ENCODE measurements at regions of chr4 and their contacts with region 1.

Region 1: GRCh38 chr4:6640292-6641163 is at the start of gene MRFAP1:
- DNase-seq: peak; percentile 94 to 97 (median 95)
- H3K4me3 ChIP-seq: peak within 1 kb of the TSS; percentile 90 to 92
- H3K4me3 Mint-ChIP-seq: peak within 1 kb of the TSS; percentile 96 to 100 (median 98)
- H3K27ac ChIP-seq: peak within 1 kb of the TSS; percentile 98
- H3K27ac Mint-ChIP-seq: peak within 1 kb of the TSS; percentile 98 to 100 (median 99)
- H3K4me1 ChIP-seq: peaks cover 31% of the 10 kb centered on the region
- H3K4me1 Mint-ChIP-seq: peaks cover 29 to 40% (median 34%) of the 10 kb centered on the region in 4 donors
- H3K27me3 ChIP-seq: no peaks in the 10 kb centered on the region
- H3K27me3 Mint-ChIP-seq: no peaks in the 10 kb centered on the region
- total RNA-seq, gene MRFAP1: 149 to 157 TPM

Region 2: GRCh38 chr4:6250235-6250983 is 390.1 kb before region 1 on chr4:
- CTCF ChIA-PET with region 1: no interaction called
- POLR2A ChIA-PET with region 1: no interaction called
- intact Hi-C with region 1: no loop called
- DNase-seq: peak in 4 of 5 donors; percentile 61 to 70 (median 66)
- H3K4me3 ChIP-seq: no peak overlapping the region
- H3K4me3 Mint-ChIP-seq: no peak overlapping the region
- H3K27ac ChIP-seq: no peak overlapping the region
- H3K27ac Mint-ChIP-seq: no peak overlapping the region
- H3K4me1 ChIP-seq: no peaks in the 10 kb centered on the region
- H3K4me1 Mint-ChIP-seq: peaks cover 0 to 6% (median 5%) of the 10 kb centered on the region in 4 donors
- H3K27me3 ChIP-seq: peaks cover 6% of the 10 kb centered on the region
- H3K27me3 Mint-ChIP-seq: peaks cover 10 to 30% of the 10 kb centered on the region in 2 donors

Region 3: GRCh38 chr4:6574747-6575502 is 65.6 kb before region 1 on chr4 and contains the start of gene MAN2B2:
- CTCF ChIA-PET with region 1: no interaction called
- POLR2A ChIA-PET with region 1: interaction called, 21 read pairs
- intact Hi-C with region 1: loop called (anchors 1 kb)
- DNase-seq: peak; percentile 76 to 83 (median 77)
- H3K4me3 ChIP-seq: peak within 1 kb of the TSS; percentile 84 to 97
- H3K4me3 Mint-ChIP-seq: peak within 1 kb of the TSS; percentile 88 to 95 (median 90)
- H3K27ac ChIP-seq: peak within 1 kb of the TSS; percentile 77
- H3K27ac Mint-ChIP-seq: peak within 1 kb of the TSS; percentile 83 to 91 (median 88)
- H3K4me1 ChIP-seq: peaks cover 26% of the 10 kb centered on the region
- H3K4me1 Mint-ChIP-seq: peaks cover 9 to 34% (median 12%) of the 10 kb centered on the region in 4 donors
- H3K27me3 ChIP-seq: no peaks in the 10 kb centered on the region
- H3K27me3 Mint-ChIP-seq: no peaks in the 10 kb centered on the region
- total RNA-seq, gene MAN2B2: 51.5 to 53.2 TPM

Region 4: GRCh38 chr4:6673660-6674499 is 33.4 kb after region 1 on chr4:
- CTCF ChIA-PET with region 1: interaction called, 19 read pairs
- POLR2A ChIA-PET with region 1: interaction called, 168 read pairs
- intact Hi-C with region 1: loop called (anchors 1 kb)
- DNase-seq: peak; percentile 94 to 96 (median 96)
- H3K4me3 ChIP-seq: peak overlapping the region; percentile 59 to 65
- H3K4me3 Mint-ChIP-seq: peak overlapping the region; percentile 92 to 99 (median 98)
- H3K27ac ChIP-seq: peak overlapping the region; percentile 71
- H3K27ac Mint-ChIP-seq: peak overlapping the region; percentile 95 to 99 (median 98)
- H3K4me1 ChIP-seq: peaks cover 36% of the 10 kb centered on the region
- H3K4me1 Mint-ChIP-seq: peaks cover 39 to 59% (median 49%) of the 10 kb centered on the region in 4 donors
- H3K27me3 ChIP-seq: no peaks in the 10 kb centered on the region
- H3K27me3 Mint-ChIP-seq: no peaks in the 10 kb centered on the region

Region 5: DNA sequence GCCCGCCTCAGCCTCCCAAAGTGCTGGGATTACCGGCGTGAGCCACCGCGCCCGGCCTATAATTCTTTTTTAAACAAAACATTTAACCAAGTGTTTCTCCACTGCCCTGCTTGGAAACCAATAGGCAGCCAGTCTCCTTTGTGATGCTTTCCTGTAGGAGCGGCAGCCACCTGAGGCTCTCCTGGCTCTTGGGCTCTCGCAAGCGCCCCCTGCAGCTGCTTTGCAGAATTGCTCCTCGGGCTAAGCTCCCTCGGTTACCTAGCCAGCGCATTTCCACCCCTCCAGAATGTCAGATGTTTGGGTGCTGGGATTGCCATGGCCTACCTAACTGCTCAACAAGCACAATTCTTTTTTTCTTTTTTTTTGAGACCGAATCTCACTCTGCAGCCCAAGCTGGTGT is 60.8 kb after region 1 on chr4:
- CTCF ChIA-PET with region 1: interaction called, 6 read pairs
- POLR2A ChIA-PET with region 1: interaction called, 113 read pairs
- intact Hi-C with region 1: loop called (anchors 1 kb)
- DNase-seq: peak in 3 of 5 donors; percentile 36 to 47 (median 40)
- H3K4me3 ChIP-seq: no peak overlapping the region
- H3K4me3 Mint-ChIP-seq: no peak overlapping the region
- H3K27ac ChIP-seq: no peak overlapping the region
- H3K27ac Mint-ChIP-seq: peak overlapping the region in 4 of 7 donors; percentile 19 to 84 (median 44)
- H3K4me1 ChIP-seq: peaks cover 73% of the 10 kb centered on the region
- H3K4me1 Mint-ChIP-seq: peaks cover 56 to 80% (median 69%) of the 10 kb centered on the region in 4 donors
- H3K27me3 ChIP-seq: no peaks in the 10 kb centered on the region
- H3K27me3 Mint-ChIP-seq: no peaks in the 10 kb centered on the region

Region 6: DNA sequence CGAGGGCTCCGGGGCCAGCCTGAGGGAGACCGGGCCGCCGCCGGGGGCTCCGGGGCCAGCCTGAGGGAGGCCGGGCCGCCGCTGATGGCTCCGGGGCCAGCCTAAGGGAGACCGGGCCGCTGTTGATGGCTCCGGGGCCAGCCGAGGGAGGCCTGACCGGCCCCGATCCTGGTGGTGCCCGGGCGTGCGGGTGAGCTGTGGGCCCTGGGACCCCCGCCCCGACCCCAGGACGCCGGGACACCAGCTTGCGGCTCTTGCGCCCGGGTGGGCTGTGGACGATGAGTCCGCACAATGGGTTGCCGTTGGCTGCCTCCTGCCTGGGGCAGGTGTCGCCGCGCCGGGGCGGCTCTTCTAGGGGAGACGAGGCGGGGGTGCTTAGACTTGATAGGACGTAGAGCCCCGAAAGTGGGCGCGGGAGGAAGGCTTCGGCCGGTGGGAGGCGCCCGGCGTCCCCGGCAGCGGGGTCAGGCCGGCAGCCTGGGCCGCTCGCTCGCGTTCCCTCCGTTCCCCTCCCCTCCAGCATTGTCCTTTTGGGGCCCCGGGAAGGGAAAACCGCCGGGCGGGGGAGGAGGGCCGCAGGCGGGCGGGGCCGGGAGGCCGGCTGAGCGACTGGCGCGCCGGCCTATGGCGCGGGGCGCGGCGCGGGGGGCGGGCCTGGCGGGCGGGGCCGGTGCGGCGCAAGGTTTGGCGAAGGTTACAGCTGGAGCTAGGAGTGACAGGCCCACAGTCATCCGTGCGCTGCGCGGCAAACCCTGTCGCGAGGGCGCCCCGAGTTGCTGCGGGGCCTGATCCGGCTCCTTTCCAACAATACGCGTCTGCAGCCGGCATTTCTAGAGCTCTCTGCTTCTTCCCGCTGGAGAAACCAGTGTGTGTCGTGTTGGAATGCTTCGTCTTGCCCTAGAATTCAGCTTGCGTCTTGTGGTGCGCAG is 142.8 kb after region 1 on chr4:
- CTCF ChIA-PET with region 1: no interaction called
- POLR2A ChIA-PET with region 1: interaction called, 11 read pairs
- intact Hi-C with region 1: loop called (anchors 1 kb)
- DNase-seq: peak; percentile 87 to 89 (median 88)
- H3K4me3 ChIP-seq: peak overlapping the region; percentile 38 to 71
- H3K4me3 Mint-ChIP-seq: peak overlapping the region; percentile 84 to 92 (median 88)
- H3K27ac ChIP-seq: peak overlapping the region; percentile 96
- H3K27ac Mint-ChIP-seq: peak overlapping the region; percentile 88 to 93 (median 91)
- H3K4me1 ChIP-seq: peaks cover 44% of the 10 kb centered on the region
- H3K4me1 Mint-ChIP-seq: peaks cover 32 to 61% (median 47%) of the 10 kb centered on the region in 4 donors
- H3K27me3 ChIP-seq: no peaks in the 10 kb centered on the region
- H3K27me3 Mint-ChIP-seq: no peaks in the 10 kb centered on the region

Region 7: GRCh38 chr4:7042697-7043464 is 402.4 kb after region 1 on chr4 and contains the start of gene TADA2B:
- CTCF ChIA-PET with region 1: no interaction called
- POLR2A ChIA-PET with region 1: interaction called, 12 read pairs
- intact Hi-C with region 1: no loop called
- DNase-seq: peak; percentile 90 to 94 (median 91)
- H3K4me3 ChIP-seq: peak within 1 kb of the TSS; percentile 83 to 91
- H3K4me3 Mint-ChIP-seq: peak within 1 kb of the TSS; percentile 89 to 97 (median 93)
- H3K27ac ChIP-seq: peak within 1 kb of the TSS; percentile 75
- H3K27ac Mint-ChIP-seq: peak within 1 kb of the TSS; percentile 81 to 95 (median 91)
- H3K4me1 ChIP-seq: peaks cover 45% of the 10 kb centered on the region
- H3K4me1 Mint-ChIP-seq: peaks cover 33 to 61% (median 40%) of the 10 kb centered on the region in 4 donors
- H3K27me3 ChIP-seq: no peaks in the 10 kb centered on the region
- H3K27me3 Mint-ChIP-seq: no peaks in the 10 kb centered on the region
- total RNA-seq, gene TADA2B: 46.4 to 49.0 TPM

Region 8: DNA sequence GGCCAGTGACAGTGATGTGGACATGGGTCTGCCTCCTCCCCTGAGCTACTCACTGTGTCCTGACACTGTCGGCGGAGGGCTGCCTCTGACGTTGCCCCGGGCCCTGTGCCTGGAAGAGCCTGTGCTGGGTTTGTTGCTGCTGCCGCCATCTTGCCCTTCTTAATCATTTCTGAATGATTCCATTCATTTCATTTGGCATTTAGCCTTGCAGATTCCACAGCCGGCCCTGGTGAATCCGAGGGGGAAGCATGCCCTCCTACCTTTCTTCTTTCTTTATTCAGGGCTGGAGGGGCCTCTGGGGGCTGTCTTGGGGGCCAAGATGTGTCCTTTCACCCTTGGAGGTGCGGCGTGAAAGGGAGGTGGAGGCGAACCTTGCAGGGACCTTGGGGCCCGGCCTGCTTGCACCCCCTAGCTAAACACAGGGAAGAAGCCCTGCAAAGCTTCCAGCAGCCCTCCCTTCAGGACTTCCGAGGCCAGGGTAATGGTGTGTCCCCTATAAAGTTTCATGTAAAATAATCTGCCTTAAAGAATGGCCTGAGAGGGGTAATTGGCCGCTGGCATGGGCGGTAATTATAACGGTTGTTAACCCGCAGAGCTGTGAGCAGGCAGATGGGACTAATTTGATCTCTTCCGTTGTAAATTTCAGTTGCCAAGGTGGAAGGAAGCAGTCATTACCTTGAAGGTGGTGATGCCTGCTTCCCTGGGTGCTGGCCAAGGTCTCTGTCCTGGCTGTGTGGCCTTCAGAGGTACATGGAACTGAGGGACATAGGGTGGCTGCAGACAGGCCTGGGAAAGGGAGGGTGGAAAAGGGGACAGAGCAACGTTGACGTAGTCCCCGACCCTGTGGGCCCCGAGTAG is 701.9 kb after region 1 on chr4:
- CTCF ChIA-PET with region 1: no interaction called
- POLR2A ChIA-PET with region 1: no interaction called
- intact Hi-C with region 1: no loop called
- DNase-seq: no peak
- H3K4me3 ChIP-seq: no peak overlapping the region
- H3K4me3 Mint-ChIP-seq: no peak overlapping the region
- H3K27ac ChIP-seq: no peak overlapping the region
- H3K27ac Mint-ChIP-seq: no peak overlapping the region
- H3K4me1 ChIP-seq: no peaks in the 10 kb centered on the region
- H3K4me1 Mint-ChIP-seq: peaks cover 0 to 2% (median 0%) of the 10 kb centered on the region in 4 donors
- H3K27me3 ChIP-seq: no peaks in the 10 kb centered on the region
- H3K27me3 Mint-ChIP-seq: peaks cover 0 to 4% of the 10 kb centered on the region in 2 donors

Measured in CD4-positive, alpha-beta memory T cell (primary cell).